Panc1 (cell line): ENCODE measurements at regions of chr1 and their contacts with region 1.

Region 1: DNA sequence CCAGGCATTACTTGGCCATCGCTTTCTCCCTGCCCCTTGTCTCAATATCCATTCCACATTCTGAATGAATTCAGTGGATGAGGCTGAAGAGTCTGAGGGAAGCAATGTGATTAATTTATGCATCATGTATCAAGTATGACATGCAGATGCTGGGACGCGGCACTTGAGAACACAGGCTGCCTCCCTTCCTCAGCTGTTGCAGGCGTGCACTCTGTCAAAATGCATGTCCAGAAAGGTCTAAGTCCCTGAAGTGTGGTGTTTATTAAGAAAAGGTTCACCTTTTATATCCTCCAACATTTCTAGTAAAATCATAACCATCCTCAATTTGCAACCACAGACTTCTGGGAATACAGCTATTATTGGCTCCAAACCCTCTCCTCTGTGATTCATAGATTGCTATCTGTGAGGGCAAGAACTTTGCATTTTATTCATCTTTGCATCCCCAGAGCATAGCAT is 22.6 kb upstream of the RAB3GAP2 start:
- DNase-seq: no peak
- ATAC-seq: no peak
- H3K4me3 ChIP-seq: no peak overlapping the region
- H3K27ac ChIP-seq: no peak overlapping the region
- H3K4me1 ChIP-seq: no peaks in the 10 kb centered on the region
- H3K27me3 ChIP-seq: peaks cover 8% of the 10 kb centered on the region; the same call in 1 of the 2 replicates
- CTCF ChIP-seq: no peak

Region 2: DNA sequence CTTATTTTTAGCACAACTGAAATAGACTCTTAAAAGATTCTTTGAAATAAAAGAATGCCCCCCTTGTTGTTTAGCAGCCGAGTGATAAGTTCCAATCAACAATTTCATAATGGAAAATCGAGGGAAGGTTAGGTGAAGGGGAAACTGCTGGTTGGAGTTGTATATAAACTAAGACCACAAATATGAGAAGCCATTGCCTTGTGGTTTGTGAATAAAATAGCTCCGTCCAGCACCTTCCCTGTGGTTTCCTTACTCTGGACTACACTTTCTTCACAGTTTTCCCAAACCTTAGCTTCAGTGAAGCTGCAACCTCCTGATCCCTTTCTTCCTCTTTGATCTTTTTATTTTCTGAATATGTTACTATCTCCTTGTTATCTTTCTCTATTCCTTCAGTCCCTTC is 15.9 kb before region 1 on chr1:
- CTCF ChIA-PET with region 1: no interaction called
- POLR2A ChIA-PET with region 1: no interaction called
- in situ Hi-C with region 1: no loop called
- intact Hi-C with region 1: no loop called
- DNase-seq: no peak
- ATAC-seq: no peak
- H3K4me3 ChIP-seq: no peak overlapping the region
- H3K27ac ChIP-seq: no peak overlapping the region
- H3K4me1 ChIP-seq: no peaks in the 10 kb centered on the region
- H3K27me3 ChIP-seq: peaks cover 22% of the 10 kb centered on the region
- CTCF ChIP-seq: no peak

Region 3: GRCh38 chr1:220353229-220354012 is 58.5 kb after region 1 on chr1:
- CTCF ChIA-PET with region 1: no interaction called
- POLR2A ChIA-PET with region 1: no interaction called
- in situ Hi-C with region 1: no loop called
- intact Hi-C with region 1: no loop called
- DNase-seq: no peak
- ATAC-seq: no peak
- H3K4me3 ChIP-seq: no peak overlapping the region
- H3K27ac ChIP-seq: no peak overlapping the region
- H3K4me1 ChIP-seq: no peaks in the 10 kb centered on the region
- H3K27me3 ChIP-seq: peaks cover 3% of the 10 kb centered on the region; the same call in 1 of the 2 replicates
- CTCF ChIP-seq: no peak

Region 4: DNA sequence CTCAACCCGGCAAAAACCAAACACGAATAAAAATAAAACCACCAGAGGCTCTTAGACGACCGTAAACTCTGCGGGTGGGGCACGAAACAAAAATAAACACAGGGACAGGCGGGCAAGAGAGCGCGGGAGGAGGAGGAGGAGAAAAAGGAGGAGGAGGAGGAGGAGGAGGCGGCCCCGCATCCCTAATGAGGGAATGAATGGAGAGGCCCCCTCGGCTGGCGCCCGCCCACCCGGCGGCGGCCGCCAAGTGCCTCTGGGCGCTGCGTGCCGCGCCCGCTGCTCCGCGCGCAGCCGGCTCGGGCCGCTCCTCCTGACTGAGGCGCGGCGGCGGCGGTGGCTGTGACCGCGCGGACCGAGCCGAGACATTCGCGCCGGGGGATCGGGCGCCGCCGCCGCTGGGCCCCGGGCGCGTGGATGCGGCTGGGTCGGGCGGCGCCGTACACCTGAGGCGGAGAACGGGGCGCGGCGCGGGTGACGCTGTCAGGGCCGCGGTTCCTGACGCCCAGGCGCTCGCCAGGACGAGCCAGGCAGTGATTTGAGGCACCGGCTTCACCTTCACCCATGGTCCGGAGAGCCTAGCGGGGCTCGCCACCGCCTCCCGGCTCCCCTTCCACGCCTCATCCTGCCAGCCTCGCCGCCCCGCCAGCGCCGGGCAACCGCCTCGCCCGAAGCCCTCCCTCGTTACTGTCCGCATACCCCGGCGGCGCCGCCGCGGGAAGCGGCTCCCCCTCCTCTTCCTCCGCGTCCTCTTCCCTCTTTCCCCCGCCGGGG is 233.2 kb after region 1 on chr1 and contains the start of gene MARK1:
- CTCF ChIA-PET with region 1: no interaction called
- POLR2A ChIA-PET with region 1: no interaction called
- in situ Hi-C with region 1: no loop called
- intact Hi-C with region 1: loop called (anchors 10 kb)
- DNase-seq: no peak
- ATAC-seq: peak; percentile 89
- H3K4me3 ChIP-seq: peak within 1 kb of the TSS; percentile 55 to 56
- H3K27ac ChIP-seq: no peak within 1 kb of the TSS
- H3K4me1 ChIP-seq: no peaks in the 10 kb centered on the region
- H3K27me3 ChIP-seq: peaks cover 56% of the 10 kb centered on the region
- CTCF ChIP-seq: no peak
- total RNA-seq, gene MARK1: not detected